B cell (primary cell): ENCODE measurements at regions of chr22 and their contacts with region 1.

Region 1: DNA sequence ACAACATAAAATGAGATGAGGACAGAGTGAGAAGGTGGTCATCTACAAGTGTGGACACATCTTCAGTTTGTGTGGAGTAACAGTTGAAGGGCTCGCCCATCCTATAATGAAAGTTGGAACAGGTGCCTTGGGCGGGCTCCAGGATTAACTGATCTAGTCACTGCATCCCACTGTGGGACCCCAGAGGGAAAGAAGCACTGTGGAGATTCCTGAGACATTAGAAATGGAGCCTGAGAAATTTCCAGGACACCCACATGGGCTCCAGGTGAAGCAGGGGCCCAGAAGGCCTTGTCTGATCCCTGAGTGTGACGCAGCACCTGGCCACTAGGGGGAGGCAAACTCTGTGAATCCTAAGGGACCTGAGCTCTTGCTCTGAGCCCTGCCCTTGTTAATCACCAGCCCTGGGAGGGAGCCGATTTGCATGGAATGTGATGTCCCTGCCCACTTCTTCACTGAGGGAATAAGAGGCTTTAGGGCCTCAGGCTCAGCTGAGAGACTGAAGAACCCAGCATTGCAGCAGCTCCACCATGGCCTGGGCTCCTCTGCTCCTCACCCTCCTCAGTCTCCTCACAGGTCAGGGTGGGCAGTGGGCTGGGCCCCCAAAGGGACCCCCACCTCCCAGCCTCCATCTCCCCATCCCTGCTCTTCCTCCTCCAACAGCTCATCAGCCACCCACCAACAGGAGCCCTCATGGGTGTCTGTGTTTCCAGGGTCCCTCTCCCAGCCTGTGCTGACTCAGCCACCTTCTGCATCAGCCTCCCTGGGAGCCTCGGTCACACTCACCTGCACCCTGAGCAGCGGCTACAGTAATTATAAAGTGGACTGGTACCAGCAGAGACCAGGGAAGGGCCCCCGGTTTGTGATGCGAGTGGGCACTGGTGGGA is 98.4 kb downstream of the VPREB1 start:
- DNase-seq: peak; percentile 75
- ATAC-seq: peak; percentile 53
- H3K4me3 ChIP-seq: no peak overlapping the region
- H3K4me3 Mint-ChIP-seq: peak overlapping the region; percentile 68
- H3K27ac ChIP-seq: peak overlapping the region; percentile 32 to 39
- H3K27ac Mint-ChIP-seq: peak overlapping the region; percentile 78
- H3K4me1 ChIP-seq: peaks cover 22 to 26% of the 10 kb centered on the region in 2 donors
- H3K4me1 Mint-ChIP-seq: peaks cover 27% of the 10 kb centered on the region
- H3K27me3 ChIP-seq: no peaks in the 10 kb centered on the region
- H3K27me3 Mint-ChIP-seq: no peaks in the 10 kb centered on the region
- CTCF ChIP-seq: peak; percentile 96

Region 2: GRCh38 chr22:22327723-22328122 is 15.2 kb before region 1 on chr22:
- CTCF ChIA-PET with region 1: interaction called, 11 read pairs
- POLR2A ChIA-PET with region 1: no interaction called
- intact Hi-C with region 1: no loop called
- DNase-seq: no peak
- ATAC-seq: peak; percentile 71
- H3K4me3 ChIP-seq: no peak overlapping the region
- H3K4me3 Mint-ChIP-seq: no peak overlapping the region
- H3K27ac ChIP-seq: no peak overlapping the region
- H3K27ac Mint-ChIP-seq: no peak overlapping the region
- H3K4me1 ChIP-seq: peaks cover 39 to 49% of the 10 kb centered on the region in 2 donors
- H3K4me1 Mint-ChIP-seq: peaks cover 38% of the 10 kb centered on the region
- H3K27me3 ChIP-seq: no peaks in the 10 kb centered on the region
- H3K27me3 Mint-ChIP-seq: peaks cover 9% of the 10 kb centered on the region
- CTCF ChIP-seq: no peak

Region 3: DNA sequence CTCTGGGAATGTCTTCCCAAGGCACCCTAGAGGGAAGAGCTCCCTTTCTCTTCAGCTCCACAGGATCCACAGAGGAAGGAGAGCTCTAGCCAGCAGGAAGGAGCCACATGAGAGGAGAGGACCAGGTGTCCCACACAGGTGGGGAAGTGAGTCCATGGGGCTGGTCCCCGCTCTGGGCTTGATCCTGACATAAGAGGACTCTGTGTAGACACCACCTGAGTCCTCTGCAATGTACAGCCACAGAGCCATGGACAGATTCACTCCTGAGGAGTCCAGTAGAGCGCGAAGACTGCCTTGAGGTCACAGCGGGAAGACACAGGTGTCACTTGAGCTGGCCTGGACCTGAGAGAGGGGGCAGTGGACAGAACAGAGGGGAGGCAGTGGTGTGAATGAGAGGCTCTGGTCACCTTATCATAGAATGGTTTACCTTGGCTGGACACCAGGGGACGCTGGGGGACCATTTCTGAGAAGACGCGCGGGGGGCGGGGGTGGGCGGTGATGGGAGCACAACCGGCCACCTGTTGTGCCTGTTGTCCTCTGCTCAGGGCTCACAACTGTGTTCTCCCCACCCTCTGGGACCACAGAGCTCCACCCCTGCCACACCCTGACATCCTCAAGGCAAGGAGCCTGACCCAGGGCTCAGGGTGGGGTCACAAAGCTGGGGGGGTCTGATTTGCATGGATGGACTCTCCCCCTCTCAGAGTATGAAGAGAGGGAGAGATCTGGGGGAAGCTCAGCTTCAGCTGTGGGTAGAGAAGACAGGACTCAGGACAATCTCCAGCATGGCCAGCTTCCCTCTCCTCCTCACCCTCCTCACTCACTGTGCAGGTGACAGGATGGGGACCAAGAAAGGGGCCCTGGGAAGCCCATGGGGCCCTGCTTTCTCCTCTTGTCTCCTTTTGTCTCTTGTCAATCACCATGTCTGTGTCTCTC is 37.4 kb after region 1 on chr22:
- CTCF ChIA-PET with region 1: interaction called, 13 read pairs
- POLR2A ChIA-PET with region 1: no interaction called
- intact Hi-C with region 1: no loop called
- DNase-seq: peak; percentile 87
- ATAC-seq: peak; percentile 88
- H3K4me3 ChIP-seq: peak overlapping the region in 1 of 5 experiments; percentile 15
- H3K4me3 Mint-ChIP-seq: peak overlapping the region; percentile 77
- H3K27ac ChIP-seq: peak overlapping the region; percentile 60 to 72
- H3K27ac Mint-ChIP-seq: peak overlapping the region; percentile 94
- H3K4me1 ChIP-seq: peaks cover 59 to 69% of the 10 kb centered on the region in 2 donors
- H3K4me1 Mint-ChIP-seq: peaks cover 79% of the 10 kb centered on the region
- H3K27me3 ChIP-seq: no peaks in the 10 kb centered on the region
- H3K27me3 Mint-ChIP-seq: no peaks in the 10 kb centered on the region
- CTCF ChIP-seq: peak; percentile 66